ENCODE measurements at regions of chr20 and their contacts with region 1.

Region 1: DNA sequence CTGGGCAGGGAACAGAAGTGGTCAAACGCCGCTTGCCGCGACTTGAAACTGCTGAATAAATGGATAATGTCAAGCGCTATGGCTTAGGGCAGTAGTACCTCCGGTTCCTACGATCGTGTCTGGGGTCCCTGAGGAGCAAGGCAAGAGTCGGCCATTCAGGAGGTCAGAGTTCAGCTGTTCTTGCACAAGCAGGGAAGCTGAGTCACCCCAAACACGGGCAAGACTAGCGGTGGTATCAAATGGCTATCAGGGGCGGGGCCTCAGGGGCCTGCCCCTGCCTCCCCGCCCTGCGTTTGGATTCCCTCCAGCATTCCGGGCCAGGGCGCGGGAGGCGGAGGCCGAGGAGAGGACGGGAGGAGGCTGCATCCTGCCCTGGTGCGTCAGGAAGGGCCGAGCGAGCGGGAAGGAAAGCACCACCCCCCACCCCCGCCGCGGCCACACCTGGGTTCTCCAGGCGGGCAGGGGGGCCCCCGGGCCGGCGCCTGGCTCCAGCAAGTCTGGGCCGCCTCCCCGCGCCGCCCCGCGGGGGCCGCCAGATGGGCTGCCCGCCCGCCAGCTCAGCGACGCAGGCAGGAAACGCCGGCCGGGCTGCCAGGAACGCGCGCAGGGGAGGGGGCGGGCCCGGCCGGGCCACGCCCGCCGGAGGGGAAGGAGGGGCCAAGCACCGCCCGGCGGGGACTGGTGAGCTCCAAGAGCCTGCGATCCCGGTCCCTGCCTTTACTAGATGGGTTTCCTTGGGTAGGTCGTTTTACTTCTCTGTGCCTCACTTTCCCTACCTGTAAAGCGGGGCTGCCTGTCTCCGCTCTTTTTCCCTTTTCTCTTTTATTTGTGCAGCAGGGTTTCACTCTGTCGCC is 32.2 kb upstream of the ID1 start:
- DNase-seq: peak; percentile 99
- ATAC-seq: peak; percentile 74
- H3K4me3 ChIP-seq: peak overlapping the region; percentile 75
- H3K27ac ChIP-seq: peak overlapping the region; percentile 83
- H3K4me1 ChIP-seq: peaks cover 30% of the 10 kb centered on the region
- H3K27me3 ChIP-seq: no peaks in the 10 kb centered on the region
- CTCF ChIP-seq: no peak

Region 2: GRCh38 chr20:31560094-31560899 is 12.6 kb before region 1 on chr20:
- CTCF ChIA-PET with region 1: interaction called, 18 read pairs
- POLR2A ChIA-PET with region 1: no interaction called
- intact Hi-C with region 1: no loop called
- DNase-seq: peak; percentile 69
- ATAC-seq: peak; percentile 39
- H3K4me3 ChIP-seq: peak overlapping the region; percentile 24
- H3K27ac ChIP-seq: peak overlapping the region; percentile 95
- H3K4me1 ChIP-seq: peaks cover 40% of the 10 kb centered on the region
- H3K27me3 ChIP-seq: no peaks in the 10 kb centered on the region
- CTCF ChIP-seq: peak; percentile 97

Region 3: GRCh38 chr20:31587545-31588389 is 14.8 kb after region 1 on chr20:
- CTCF ChIA-PET with region 1: interaction called, 25 read pairs
- POLR2A ChIA-PET with region 1: interaction called, 62 read pairs
- intact Hi-C with region 1: loop called (anchors 1 kb)
- DNase-seq: no peak
- ATAC-seq: peak; percentile 61
- H3K4me3 ChIP-seq: peak overlapping the region; percentile 68
- H3K27ac ChIP-seq: no peak overlapping the region
- H3K4me1 ChIP-seq: peaks cover 21% of the 10 kb centered on the region
- H3K27me3 ChIP-seq: no peaks in the 10 kb centered on the region
- CTCF ChIP-seq: no peak

Region 4: GRCh38 chr20:31595654-31596411 is 22.9 kb after region 1 on chr20:
- CTCF ChIA-PET with region 1: interaction called, 25 read pairs
- POLR2A ChIA-PET with region 1: interaction called, 62 read pairs
- intact Hi-C with region 1: loop called (anchors 1 kb)
- DNase-seq: peak; percentile 65
- ATAC-seq: no peak
- H3K4me3 ChIP-seq: no peak overlapping the region
- H3K27ac ChIP-seq: peak overlapping the region; percentile 84
- H3K4me1 ChIP-seq: peaks cover 28% of the 10 kb centered on the region
- H3K27me3 ChIP-seq: no peaks in the 10 kb centered on the region
- CTCF ChIP-seq: no peak

Region 5: GRCh38 chr20:31605031-31605901 is 32.3 kb after region 1 on chr20 and contains the start of gene ID1:
- CTCF ChIA-PET with region 1: interaction called, 86 read pairs
- POLR2A ChIA-PET with region 1: interaction called, 27 read pairs
- intact Hi-C with region 1: loop called (anchors 1 kb)
- DNase-seq: peak; percentile 97
- ATAC-seq: peak; percentile 49
- H3K4me3 ChIP-seq: peak within 1 kb of the TSS; percentile 97
- H3K27ac ChIP-seq: peak within 1 kb of the TSS; percentile 69
- H3K4me1 ChIP-seq: peaks cover 57% of the 10 kb centered on the region
- H3K27me3 ChIP-seq: no peaks in the 10 kb centered on the region
- CTCF ChIP-seq: no peak
- total RNA-seq, gene ID1: 774 and 872 TPM in 2 replicates

Region 6: DNA sequence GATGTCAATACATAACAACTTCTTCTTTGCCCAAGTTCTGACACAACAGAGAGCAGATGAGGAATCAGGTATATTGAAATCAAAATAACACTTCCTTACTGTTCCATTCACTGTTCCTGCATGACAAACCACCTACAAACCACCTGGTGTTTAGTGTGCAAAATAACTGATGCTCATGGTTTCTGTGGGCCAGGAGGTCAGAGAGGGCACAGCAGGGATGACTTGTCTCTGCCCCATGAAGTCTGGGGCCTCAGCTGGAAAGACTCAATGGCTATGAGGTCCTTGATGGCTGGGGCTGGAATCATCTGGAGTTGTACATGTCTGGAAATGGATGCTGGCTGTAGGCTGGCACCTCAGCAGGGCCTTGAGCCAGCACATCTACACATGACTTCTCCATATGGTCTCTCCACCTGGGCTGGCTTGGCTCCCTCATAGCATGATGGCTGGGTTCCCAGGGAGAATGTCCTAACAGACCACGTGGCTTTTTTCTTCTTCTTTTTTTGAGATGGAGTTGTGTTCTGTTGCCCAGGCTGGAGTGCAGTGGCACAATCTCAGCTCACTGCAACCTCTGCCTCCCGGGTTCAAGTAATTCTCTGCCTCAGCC is 57.4 kb after region 1 on chr20:
- CTCF ChIA-PET with region 1: interaction called, 13 read pairs
- POLR2A ChIA-PET with region 1: no interaction called
- intact Hi-C with region 1: no loop called
- DNase-seq: no peak
- ATAC-seq: no peak
- H3K4me3 ChIP-seq: no peak overlapping the region
- H3K27ac ChIP-seq: no peak overlapping the region
- H3K4me1 ChIP-seq: no peaks in the 10 kb centered on the region
- H3K27me3 ChIP-seq: no peaks in the 10 kb centered on the region
- CTCF ChIP-seq: no peak

Region 7: DNA sequence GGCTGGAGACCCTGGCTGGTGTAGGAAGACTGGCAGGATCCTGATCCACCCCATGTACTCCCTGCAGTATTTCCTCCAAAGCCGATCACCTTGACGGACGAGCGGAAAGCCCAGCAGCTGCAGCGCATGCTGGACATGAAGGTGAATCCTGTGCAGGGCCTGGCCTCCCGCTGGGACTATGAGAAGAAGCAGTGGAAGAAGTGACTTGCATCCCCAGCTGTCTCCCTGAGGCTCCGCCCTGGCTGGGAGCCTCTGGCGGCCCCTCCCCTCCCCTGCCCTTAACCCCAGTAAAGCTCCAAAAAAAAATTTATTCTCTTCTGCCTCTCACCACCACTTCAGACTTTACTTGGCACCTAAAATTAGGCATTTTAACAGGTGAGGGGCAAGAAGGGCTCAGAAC is 71.8 kb after region 1 on chr20:
- CTCF ChIA-PET with region 1: no interaction called
- POLR2A ChIA-PET with region 1: interaction called, 17 read pairs
- intact Hi-C with region 1: no loop called
- DNase-seq: no peak
- ATAC-seq: peak; percentile 37; the same call in 1 of the 2 replicates
- H3K4me3 ChIP-seq: no peak overlapping the region
- H3K27ac ChIP-seq: no peak overlapping the region
- H3K4me1 ChIP-seq: no peaks in the 10 kb centered on the region
- H3K27me3 ChIP-seq: no peaks in the 10 kb centered on the region
- CTCF ChIP-seq: no peak

Measured in PC-3 (cell line).